ENCODE measurements at regions of chr7 and their contacts with region 1.

Region 1: GRCh38 chr7:106064771-106065585 is 47.1 kb downstream of the SYPL1 start:
- DNase-seq: peak; percentile 78
- ATAC-seq: peak; percentile 96
- H3K4me3 ChIP-seq: peak overlapping the region; percentile 27 to 65 (median 50)
- H3K27ac ChIP-seq: peak overlapping the region; percentile 11
- H3K4me1 ChIP-seq: peaks cover 77% of the 10 kb centered on the region
- H3K27me3 ChIP-seq: peaks cover 3 to 11% of the 10 kb centered on the region in 2 experiments; a peak in 2 of 5 replicates
- CTCF ChIP-seq: peak; percentile 36
- EP300 ChIP-seq: no peak
- POLR2A ChIP-seq: no peak
- RAD21 ChIP-seq: no peak

Region 2: GRCh38 chr7:105958012-105958411 is 107.0 kb before region 1 on chr7:
- CTCF ChIA-PET with region 1: no interaction called
- POLR2A ChIA-PET with region 1: no interaction called
- in situ Hi-C with region 1: no loop called
- intact Hi-C with region 1: no loop called
- DNase-seq: no peak
- ATAC-seq: no peak
- H3K4me3 ChIP-seq: no peak overlapping the region
- H3K27ac ChIP-seq: no peak overlapping the region
- H3K4me1 ChIP-seq: peaks cover 6% of the 10 kb centered on the region; the same call in 1 of the 2 replicates
- H3K27me3 ChIP-seq: no peaks in the 10 kb centered on the region
- CTCF ChIP-seq: no peak
- EP300 ChIP-seq: no peak
- POLR2A ChIP-seq: no peak
- RAD21 ChIP-seq: no peak

Region 3: GRCh38 chr7:106112117-106112971 is 47.4 kb after region 1 on chr7 and contains the start of gene SYPL1:
- CTCF ChIA-PET with region 1: no interaction called
- POLR2A ChIA-PET with region 1: interaction called, 10 read pairs
- in situ Hi-C with region 1: no loop called
- intact Hi-C with region 1: loop called (anchors 2 kb)
- DNase-seq: peak; percentile 78
- ATAC-seq: peak; percentile 94
- H3K4me3 ChIP-seq: peak within 1 kb of the TSS; percentile 77 to 91 (median 86)
- H3K27ac ChIP-seq: peak within 1 kb of the TSS; percentile 91
- H3K4me1 ChIP-seq: peaks cover 32% of the 10 kb centered on the region
- H3K27me3 ChIP-seq: no peaks in the 10 kb centered on the region
- CTCF ChIP-seq: peak; percentile 27; the same call in 1 of the 2 replicates
- EP300 ChIP-seq: no peak
- POLR2A ChIP-seq: peak; percentile 70 to 82
- RAD21 ChIP-seq: no peak
- total RNA-seq, gene SYPL1: 25.7 and 27.5 TPM in 2 replicates

Region 4: GRCh38 chr7:106126170-106126938 is 61.4 kb after region 1 on chr7:
- CTCF ChIA-PET with region 1: no interaction called
- POLR2A ChIA-PET with region 1: no interaction called
- in situ Hi-C with region 1: no loop called
- intact Hi-C with region 1: no loop called
- DNase-seq: no peak
- ATAC-seq: no peak
- H3K4me3 ChIP-seq: no peak overlapping the region
- H3K27ac ChIP-seq: no peak overlapping the region
- H3K4me1 ChIP-seq: no peaks in the 10 kb centered on the region; the same call in 1 of the 2 replicates
- H3K27me3 ChIP-seq: 0 out of 5 replicates have a peak, but pooled peaks cover 0 to 12% of the 10 kb centered on the region in 2 experiments
- CTCF ChIP-seq: no peak
- EP300 ChIP-seq: no peak
- POLR2A ChIP-seq: no peak
- RAD21 ChIP-seq: no peak

Measured in HepG2 (cell line).